Dorsolateral prefrontal cortex (tissue), 120 donors: ENCODE measurements at regions of chr12 and their contacts with region 1.

Region 1: DNA sequence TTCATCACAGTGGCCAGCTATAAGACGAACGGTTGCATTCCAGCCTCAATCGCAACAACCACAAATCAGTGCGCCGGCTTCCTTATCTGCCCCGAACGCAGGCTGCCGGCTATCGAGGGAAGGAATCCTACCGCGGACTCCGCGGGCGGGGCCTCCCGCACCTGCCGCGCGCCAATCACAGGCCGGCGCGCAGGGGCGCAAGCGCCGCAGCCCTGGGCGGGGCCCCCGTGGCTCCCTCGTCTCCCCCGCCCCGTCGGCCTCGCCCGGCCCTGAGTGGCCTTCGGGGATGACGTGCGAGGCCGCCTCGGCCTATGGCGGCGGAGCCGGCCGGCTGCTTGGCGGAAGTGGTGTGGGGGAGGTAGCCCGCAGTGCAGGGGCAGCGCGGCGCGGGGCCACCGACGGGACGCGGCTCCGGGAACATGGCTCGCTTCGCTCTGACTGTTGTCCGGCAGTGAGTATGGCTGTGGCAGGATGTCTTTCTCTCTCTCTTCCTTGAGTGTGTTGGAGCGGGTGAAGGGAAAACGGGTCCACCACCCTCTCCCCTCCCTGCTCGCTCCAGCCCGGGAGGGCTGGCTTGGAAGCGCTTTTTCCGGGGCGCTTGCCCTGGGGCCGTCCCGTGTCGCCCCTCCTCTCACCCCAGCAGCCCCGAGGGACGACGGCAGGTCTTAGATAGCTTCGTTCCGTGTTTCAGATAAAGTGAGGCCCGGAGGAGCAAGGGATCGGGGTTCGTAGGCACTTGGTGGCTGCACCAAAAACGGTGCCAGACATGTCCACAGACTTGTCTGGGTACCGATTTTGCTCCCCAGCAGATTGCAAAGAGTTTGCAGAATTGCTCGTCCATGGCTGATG is at the start of gene TIGAR:
- DNase-seq: peak; percentile 87 to 99 (median 94)
- H3K4me3 ChIP-seq: peak within 1 kb of the TSS; percentile 64 to 100 (median 89)
- H3K27ac ChIP-seq: peak within 1 kb of the TSS; percentile 36 to 95 (median 83)
- H3K27me3 ChIP-seq: no peaks in the 10 kb centered on the region
- CTCF ChIP-seq: peak in 25 of 56 donors; percentile 3 to 50 (median 18)
- total RNA-seq, gene TIGAR: 6.8 to 24.9 (median 15.4) TPM

Region 2: DNA sequence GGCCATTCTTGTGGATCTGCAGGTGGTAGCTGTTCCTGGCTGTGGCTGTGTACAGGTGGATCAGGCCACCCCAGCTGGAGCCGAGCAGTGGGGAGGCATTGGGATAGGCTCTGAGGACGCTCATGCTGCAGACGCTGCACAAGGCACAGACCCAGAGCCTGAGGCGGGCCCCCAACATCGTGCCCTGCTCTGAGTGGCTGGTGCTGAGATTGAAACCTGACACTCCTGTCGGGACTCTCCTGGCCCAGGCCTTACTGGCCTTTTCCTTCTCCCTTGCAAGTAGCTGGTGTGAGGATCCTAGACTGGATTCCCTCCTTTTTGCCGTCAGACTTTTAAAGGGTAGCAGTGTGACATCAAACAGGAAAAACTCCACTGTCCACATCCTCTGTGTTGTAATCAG is 58.3 kb after region 1 on chr12 and contains the start of gene FGF23:
- intact Hi-C with region 1: loop called in 1 of 2 experiments (anchors 2 kb)
- DNase-seq: no peak
- H3K4me3 ChIP-seq: no peak within 1 kb of the TSS
- H3K27ac ChIP-seq: no peak within 1 kb of the TSS
- H3K27me3 ChIP-seq: peaks cover 0 to 7% (median 0%) of the 10 kb centered on the region in 45 donors
- CTCF ChIP-seq: no peak
- total RNA-seq, gene FGF23: not detected

Region 3: GRCh38 chr12:4538207-4539160 is 217.4 kb after region 1 on chr12 and contains the start of gene RAD51AP1:
- intact Hi-C with region 1: loop called (anchors 5 to 10 kb)
- DNase-seq: peak; percentile 88 to 95 (median 94)
- H3K4me3 ChIP-seq: peak within 1 kb of the TSS; percentile 51 to 100 (median 88)
- H3K27ac ChIP-seq: peak within 1 kb of the TSS; percentile 71 to 99 (median 96)
- H3K27me3 ChIP-seq: no peaks in the 10 kb centered on the region
- CTCF ChIP-seq: peak in 29 of 56 donors; percentile 4 to 57 (median 34)
- total RNA-seq, gene RAD51AP1: 0.65 to 6.6 (median 2.8) TPM

Region 4: DNA sequence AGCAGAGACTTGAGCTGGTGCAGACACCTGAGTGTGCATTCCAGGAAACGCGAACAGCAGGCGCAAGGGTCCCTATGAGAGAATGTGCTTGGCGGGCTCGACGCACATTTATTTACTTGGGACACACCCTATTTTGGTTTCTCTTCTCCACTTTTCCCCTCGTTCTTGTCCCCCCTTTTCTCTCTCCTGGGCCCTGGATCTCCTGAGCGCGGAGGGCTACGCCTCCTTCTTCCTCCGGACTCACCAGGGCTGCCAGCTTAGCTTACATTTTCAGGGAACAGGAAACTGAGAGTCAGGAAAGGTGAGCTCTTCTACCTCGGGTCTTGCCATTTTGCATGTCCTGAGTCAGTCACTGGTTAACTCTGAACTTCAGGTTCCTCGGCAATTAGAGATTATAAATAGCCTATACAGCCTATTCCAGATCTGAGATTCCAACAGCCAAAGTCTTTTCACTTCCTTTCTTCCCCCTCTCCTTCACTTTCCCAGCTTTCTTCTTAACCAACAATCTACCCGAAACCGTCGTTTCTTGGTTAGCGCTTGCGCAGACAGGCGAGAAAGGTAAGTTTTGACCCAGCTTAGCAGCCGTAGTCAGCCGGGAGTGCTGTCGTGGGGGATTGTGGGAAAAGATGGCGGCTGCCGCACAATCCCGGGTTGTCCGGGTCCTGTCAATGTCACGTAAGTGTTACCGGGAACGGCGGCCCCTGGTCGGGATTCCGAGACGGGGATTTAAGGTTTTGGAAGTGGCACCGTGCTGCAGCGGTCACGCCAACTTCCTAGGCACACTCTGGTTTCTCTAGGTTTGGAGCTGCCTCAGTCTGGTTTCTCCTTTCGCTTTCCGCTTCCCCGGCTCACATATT is 327.7 kb after region 1 on chr12 and contains the starts of genes AKAP3 and NDUFA9:
- intact Hi-C with region 1: loop called in 1 of 2 experiments (anchors 5 kb)
- DNase-seq: peak; percentile 74 to 88 (median 82)
- H3K4me3 ChIP-seq: peak within 1 kb of the TSS; percentile 64 to 99 (median 87)
- H3K27ac ChIP-seq: peak within 1 kb of the TSS; percentile 2 to 94 (median 81)
- H3K27me3 ChIP-seq: no peaks in the 10 kb centered on the region
- CTCF ChIP-seq: peak in 39 of 56 donors; percentile 5 to 58 (median 28)
- total RNA-seq, gene AKAP3: 0.41 to 13.6 (median 3.8) TPM
- total RNA-seq, gene NDUFA9: 42.3 to 124 (median 84.2) TPM